HepG2 (cell line): ENCODE measurements at regions of chr18 and their contacts with region 1.

Region 1: DNA sequence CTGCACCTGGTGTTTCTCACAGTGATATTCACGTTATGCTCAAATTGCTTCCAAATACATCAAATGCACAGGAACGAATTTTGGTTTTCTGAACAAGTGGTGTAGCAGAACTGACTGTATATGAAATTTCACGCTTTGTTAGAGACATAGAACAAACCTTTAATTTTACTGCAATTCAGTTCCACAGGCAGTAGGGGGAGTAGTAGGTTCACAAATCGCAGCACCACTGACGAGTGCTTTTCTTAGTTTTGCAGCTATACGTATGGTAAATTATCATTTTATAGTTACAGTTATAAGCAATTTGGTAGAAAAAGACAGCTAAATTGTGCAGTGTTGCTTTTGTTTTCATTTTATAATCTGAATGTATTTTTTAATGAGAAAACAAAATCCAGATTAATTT is 113.3 kb downstream of the KIAA1328 start:
- DNase-seq: peak; percentile 19
- ATAC-seq: peak; percentile 73
- H3K4me3 ChIP-seq: no peak overlapping the region
- H3K27ac ChIP-seq: no peak overlapping the region
- H3K4me1 ChIP-seq: no peaks in the 10 kb centered on the region
- H3K27me3 ChIP-seq: no peaks in the 10 kb centered on the region
- CTCF ChIP-seq: peak; percentile 79
- EP300 ChIP-seq: no peak
- POLR2A ChIP-seq: no peak
- RAD21 ChIP-seq: peak; percentile 61

Region 2: GRCh38 chr18:36917907-36918306 is 24.4 kb before region 1 on chr18:
- CTCF ChIA-PET with region 1: no interaction called
- POLR2A ChIA-PET with region 1: no interaction called
- in situ Hi-C with region 1: no loop called
- intact Hi-C with region 1: no loop called
- DNase-seq: no peak
- ATAC-seq: no peak
- H3K4me3 ChIP-seq: no peak overlapping the region
- H3K27ac ChIP-seq: no peak overlapping the region
- H3K4me1 ChIP-seq: no peaks in the 10 kb centered on the region
- H3K27me3 ChIP-seq: no peaks in the 10 kb centered on the region
- CTCF ChIP-seq: no peak
- EP300 ChIP-seq: no peak
- POLR2A ChIP-seq: no peak
- RAD21 ChIP-seq: no peak

Region 3: DNA sequence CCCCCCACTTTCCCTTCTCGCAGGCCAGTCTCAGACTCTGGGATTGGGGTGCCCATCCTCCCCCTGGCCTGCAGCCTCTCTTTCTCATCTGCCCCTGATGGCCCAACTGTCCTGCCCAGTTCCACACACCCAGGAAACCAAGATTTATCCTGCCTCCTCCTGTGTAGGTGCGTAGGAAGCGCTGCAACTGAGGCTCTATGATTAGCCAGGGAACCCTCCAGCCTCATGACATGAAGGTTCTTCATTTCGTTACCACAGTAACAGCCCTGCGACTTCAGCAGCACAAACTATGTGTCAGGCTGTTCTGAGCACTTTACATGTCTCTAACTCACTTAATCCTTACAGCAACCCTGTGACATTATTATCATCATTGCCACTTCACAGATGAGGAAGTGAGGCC is 317.4 kb after region 1 on chr18:
- CTCF ChIA-PET with region 1: no interaction called
- POLR2A ChIA-PET with region 1: no interaction called
- in situ Hi-C with region 1: no loop called
- intact Hi-C with region 1: loop called (anchors 5 kb)
- DNase-seq: no peak
- ATAC-seq: no peak
- H3K4me3 ChIP-seq: no peak overlapping the region
- H3K27ac ChIP-seq: no peak overlapping the region
- H3K4me1 ChIP-seq: no peaks in the 10 kb centered on the region
- H3K27me3 ChIP-seq: peaks cover 1 to 49% of the 10 kb centered on the region in 2 experiments
- CTCF ChIP-seq: no peak
- EP300 ChIP-seq: no peak
- POLR2A ChIP-seq: no peak
- RAD21 ChIP-seq: no peak

Region 4: GRCh38 chr18:37322492-37323035 is 380.3 kb after region 1 on chr18:
- CTCF ChIA-PET with region 1: no interaction called
- POLR2A ChIA-PET with region 1: no interaction called
- in situ Hi-C with region 1: no loop called
- intact Hi-C with region 1: loop called (anchors 5 kb)
- DNase-seq: peak; percentile 31
- ATAC-seq: peak; percentile 92
- H3K4me3 ChIP-seq: no peak overlapping the region
- H3K27ac ChIP-seq: no peak overlapping the region
- H3K4me1 ChIP-seq: no peaks in the 10 kb centered on the region
- H3K27me3 ChIP-seq: peaks cover 3 to 35% of the 10 kb centered on the region in 2 experiments; a peak in 4 of 5 replicates
- CTCF ChIP-seq: peak; percentile 92
- EP300 ChIP-seq: no peak
- POLR2A ChIP-seq: no peak
- RAD21 ChIP-seq: peak; percentile 59; the same call in 1 of the 2 replicates

Region 5: GRCh38 chr18:37335409-37335736 is 393.1 kb after region 1 on chr18:
- CTCF ChIA-PET with region 1: interaction called, 3 read pairs
- POLR2A ChIA-PET with region 1: no interaction called
- in situ Hi-C with region 1: loop called (anchors 10 kb)
- intact Hi-C with region 1: loop called (anchors 2 kb)
- DNase-seq: no peak
- ATAC-seq: peak; percentile 90
- H3K4me3 ChIP-seq: no peak overlapping the region
- H3K27ac ChIP-seq: no peak overlapping the region
- H3K4me1 ChIP-seq: no peaks in the 10 kb centered on the region
- H3K27me3 ChIP-seq: peaks cover 0 to 3% of the 10 kb centered on the region in 2 experiments; a peak in 1 of 5 replicates
- CTCF ChIP-seq: peak; percentile 60
- EP300 ChIP-seq: no peak
- POLR2A ChIP-seq: no peak
- RAD21 ChIP-seq: no peak

Region 6: GRCh38 chr18:37341016-37341415 is 398.8 kb after region 1 on chr18:
- CTCF ChIA-PET with region 1: no interaction called
- POLR2A ChIA-PET with region 1: no interaction called
- in situ Hi-C with region 1: loop called (anchors 10 kb)
- intact Hi-C with region 1: loop called (anchors 2 kb)
- DNase-seq: no peak
- ATAC-seq: no peak
- H3K4me3 ChIP-seq: no peak overlapping the region
- H3K27ac ChIP-seq: no peak overlapping the region
- H3K4me1 ChIP-seq: no peaks in the 10 kb centered on the region
- H3K27me3 ChIP-seq: peaks cover 0 to 9% of the 10 kb centered on the region in 2 experiments; a peak in 1 of 5 replicates
- CTCF ChIP-seq: no peak
- EP300 ChIP-seq: no peak
- POLR2A ChIP-seq: no peak
- RAD21 ChIP-seq: no peak

Region 7: GRCh38 chr18:37476182-37476581 is 533.9 kb after region 1 on chr18:
- CTCF ChIA-PET with region 1: interaction called, 4 read pairs
- POLR2A ChIA-PET with region 1: no interaction called
- in situ Hi-C with region 1: loop called (anchors 25 kb)
- intact Hi-C with region 1: no loop called
- DNase-seq: peak; percentile 15
- ATAC-seq: peak; percentile 69
- H3K4me3 ChIP-seq: no peak overlapping the region
- H3K27ac ChIP-seq: no peak overlapping the region
- H3K4me1 ChIP-seq: no peaks in the 10 kb centered on the region
- H3K27me3 ChIP-seq: peaks cover 3 to 14% of the 10 kb centered on the region in 2 experiments; a peak in 2 of 5 replicates
- CTCF ChIP-seq: peak; percentile 66
- EP300 ChIP-seq: no peak
- POLR2A ChIP-seq: no peak
- RAD21 ChIP-seq: 0 out of 2 replicates have a peak, but pooled peaks have one; percentile 19

Region 8: DNA sequence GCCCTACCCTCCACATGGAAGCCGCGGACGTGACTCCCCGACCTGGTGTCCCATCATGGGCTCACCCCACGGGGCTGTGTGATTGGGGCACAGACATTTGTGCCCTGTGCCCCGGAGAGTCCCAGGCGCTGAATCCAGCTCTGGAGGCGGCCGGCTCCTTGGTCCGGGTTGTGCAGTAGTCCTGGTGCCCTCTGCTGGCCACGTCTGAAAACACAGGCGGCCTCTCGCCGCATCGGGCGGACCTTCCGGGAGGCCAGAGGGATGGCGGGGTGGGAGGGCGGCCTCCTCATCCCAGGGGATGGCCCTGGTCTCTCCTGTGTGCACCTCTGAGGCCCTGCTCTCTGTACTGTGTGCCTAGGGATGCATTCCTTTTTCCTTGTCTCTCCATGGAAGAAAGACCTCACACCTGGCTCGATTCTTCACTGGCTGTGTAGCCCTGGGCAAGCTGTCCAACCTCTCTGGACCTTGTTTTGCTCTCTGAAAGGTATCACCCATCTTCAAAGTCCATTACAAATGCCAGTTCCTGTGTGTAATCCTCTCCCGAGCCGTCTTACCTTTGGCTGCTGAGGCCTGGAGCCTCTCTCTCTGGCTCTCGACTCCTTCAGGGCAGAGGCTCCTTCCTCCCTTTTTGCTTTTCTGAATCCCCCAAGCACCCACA is 595.7 kb after region 1 on chr18:
- CTCF ChIA-PET with region 1: interaction called, 5 read pairs
- POLR2A ChIA-PET with region 1: no interaction called
- in situ Hi-C with region 1: no loop called
- intact Hi-C with region 1: loop called (anchors 1 kb)
- DNase-seq: peak; percentile 22
- ATAC-seq: peak; percentile 96
- H3K4me3 ChIP-seq: no peak overlapping the region
- H3K27ac ChIP-seq: no peak overlapping the region
- H3K4me1 ChIP-seq: no peaks in the 10 kb centered on the region
- H3K27me3 ChIP-seq: peaks cover 3 to 81% of the 10 kb centered on the region in 2 experiments
- CTCF ChIP-seq: peak; percentile 91
- EP300 ChIP-seq: no peak
- POLR2A ChIP-seq: no peak
- RAD21 ChIP-seq: peak; percentile 62

Region 9: DNA sequence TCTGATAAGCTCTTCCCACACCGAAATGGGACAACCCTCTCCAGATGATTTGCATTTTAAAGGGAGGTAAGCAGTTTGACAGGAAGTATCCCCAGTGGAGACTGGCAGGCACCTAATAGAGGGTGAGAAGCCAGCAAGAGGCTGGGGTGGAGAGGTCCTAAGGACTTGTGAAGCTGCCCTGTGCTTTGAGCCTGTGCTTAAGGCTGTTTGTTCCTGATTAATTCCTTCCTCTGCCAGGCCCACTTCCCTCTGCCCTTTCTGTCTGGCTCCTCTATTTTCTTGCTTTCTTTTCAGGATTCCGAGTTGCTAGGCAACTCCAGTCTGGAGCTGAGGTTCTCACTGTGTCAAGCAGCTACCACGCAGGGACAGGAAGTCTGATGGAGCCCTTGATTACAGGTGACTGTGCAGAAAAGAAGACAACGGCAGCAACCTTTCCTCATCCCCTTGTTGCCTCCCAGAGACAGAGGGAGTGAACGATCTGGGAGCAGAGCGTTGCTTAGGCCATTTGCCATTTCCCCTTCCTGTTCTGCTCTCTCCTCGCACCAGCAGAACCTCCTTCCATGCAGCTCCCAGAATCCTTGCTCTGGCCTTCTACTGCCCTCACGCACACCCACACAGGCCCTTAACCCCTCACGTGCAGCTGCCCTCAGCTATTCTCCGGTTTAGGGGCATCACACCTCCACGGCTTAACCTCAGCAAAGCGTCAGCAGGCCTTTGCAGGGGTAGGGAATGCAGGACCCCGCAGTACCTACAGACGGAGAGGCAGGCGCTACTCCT is 726.9 kb after region 1 on chr18:
- CTCF ChIA-PET with region 1: no interaction called
- POLR2A ChIA-PET with region 1: no interaction called
- in situ Hi-C with region 1: no loop called
- intact Hi-C with region 1: no loop called
- DNase-seq: no peak
- ATAC-seq: no peak
- H3K4me3 ChIP-seq: no peak overlapping the region
- H3K27ac ChIP-seq: no peak overlapping the region
- H3K4me1 ChIP-seq: no peaks in the 10 kb centered on the region
- H3K27me3 ChIP-seq: 0 out of 5 replicates have a peak, but pooled peaks cover 0 to 3% of the 10 kb centered on the region in 2 experiments
- CTCF ChIP-seq: no peak
- EP300 ChIP-seq: no peak
- POLR2A ChIP-seq: no peak
- RAD21 ChIP-seq: no peak